Heart left ventricle (tissue), 16 donors: ENCODE measurements at regions of chr4 and their contacts with region 1.

Region 1: GRCh38 chr4:184100297-184100885 is 117.3 kb downstream of the ENPP6 start:
- DNase-seq: peak; percentile 26 to 85 (median 46)
- ATAC-seq: peak; percentile 57 to 80 (median 70)
- H3K4me3 ChIP-seq: no peak overlapping the region
- H3K27ac ChIP-seq: no peak overlapping the region
- H3K4me1 ChIP-seq: peaks cover 0 to 35% (median 12%) of the 10 kb centered on the region in 12 donors
- H3K27me3 ChIP-seq: no peaks in the 10 kb centered on the region
- CTCF ChIP-seq: peak in 11 of 12 donors; percentile 53 to 91 (median 65)
- POLR2A ChIP-seq: no peak

Region 2: DNA sequence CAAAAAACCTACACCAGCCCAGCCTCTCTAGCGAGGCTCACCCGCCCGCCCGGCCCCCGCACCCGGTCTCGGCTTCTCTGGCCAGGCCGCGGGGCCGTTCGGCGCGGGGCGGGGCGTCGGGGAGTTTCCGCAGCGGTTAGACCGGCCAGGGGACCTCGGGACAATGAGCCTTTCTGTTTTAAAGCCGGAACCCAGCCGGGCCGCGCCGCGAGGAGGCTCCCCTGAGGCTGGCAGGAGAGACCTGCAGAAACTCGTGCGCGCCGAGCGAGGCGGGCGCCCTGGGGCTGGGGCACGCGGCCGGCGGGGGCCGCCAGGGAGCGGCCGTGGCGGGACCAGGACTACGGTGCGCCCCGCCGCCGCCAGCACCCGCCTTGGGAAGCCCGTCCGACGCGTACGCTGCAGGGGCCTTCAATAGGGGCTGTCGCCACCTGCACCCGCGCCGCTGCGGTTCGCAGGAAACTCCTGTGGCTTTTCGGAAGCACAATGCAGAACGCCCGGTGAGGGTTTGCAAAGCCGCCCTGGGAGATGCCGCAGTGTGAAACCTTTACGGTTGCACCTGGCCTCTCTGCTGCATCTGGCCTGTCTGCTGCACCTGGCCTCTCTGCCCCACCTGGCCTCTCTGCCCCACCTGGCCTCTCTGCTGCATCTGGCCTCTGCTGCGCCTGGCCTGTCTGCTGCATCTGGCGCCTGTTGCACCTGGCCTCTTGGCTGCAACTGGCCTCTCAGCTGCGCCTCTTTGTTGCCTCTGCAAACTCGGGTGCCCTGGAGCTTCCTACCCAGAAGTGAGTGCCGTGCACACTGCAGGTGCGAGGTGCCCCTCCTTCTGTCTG is 377.4 kb before region 1 on chr4:
- intact Hi-C with region 1: loop called in 1 of 10 experiments (anchors 10 kb)
- DNase-seq: peak; percentile 61 to 86 (median 72)
- ATAC-seq: peak; percentile 24 to 78 (median 75)
- H3K4me3 ChIP-seq: peak overlapping the region; percentile 32 to 70 (median 58)
- H3K27ac ChIP-seq: peak overlapping the region in 11 of 12 donors; percentile 3 to 74 (median 44)
- H3K4me1 ChIP-seq: peaks cover 0 to 18% (median 1%) of the 10 kb centered on the region in 12 donors
- H3K27me3 ChIP-seq: no peaks in the 10 kb centered on the region
- CTCF ChIP-seq: peak in 4 of 12 donors; percentile 7 to 31 (median 13)
- POLR2A ChIP-seq: no peak

Region 3: GRCh38 chr4:184287697-184288255 is 187.4 kb after region 1 on chr4:
- intact Hi-C with region 1: no loop called
- DNase-seq: no peak
- ATAC-seq: peak; percentile 45 to 79 (median 78)
- H3K4me3 ChIP-seq: no peak overlapping the region
- H3K27ac ChIP-seq: peak overlapping the region in 1 of 12 donors; percentile 1
- H3K4me1 ChIP-seq: peaks cover 0 to 15% (median 0%) of the 10 kb centered on the region in 12 donors
- H3K27me3 ChIP-seq: no peaks in the 10 kb centered on the region
- CTCF ChIP-seq: peak in 10 of 12 donors; percentile 20 to 64 (median 50)
- POLR2A ChIP-seq: no peak

Region 4: DNA sequence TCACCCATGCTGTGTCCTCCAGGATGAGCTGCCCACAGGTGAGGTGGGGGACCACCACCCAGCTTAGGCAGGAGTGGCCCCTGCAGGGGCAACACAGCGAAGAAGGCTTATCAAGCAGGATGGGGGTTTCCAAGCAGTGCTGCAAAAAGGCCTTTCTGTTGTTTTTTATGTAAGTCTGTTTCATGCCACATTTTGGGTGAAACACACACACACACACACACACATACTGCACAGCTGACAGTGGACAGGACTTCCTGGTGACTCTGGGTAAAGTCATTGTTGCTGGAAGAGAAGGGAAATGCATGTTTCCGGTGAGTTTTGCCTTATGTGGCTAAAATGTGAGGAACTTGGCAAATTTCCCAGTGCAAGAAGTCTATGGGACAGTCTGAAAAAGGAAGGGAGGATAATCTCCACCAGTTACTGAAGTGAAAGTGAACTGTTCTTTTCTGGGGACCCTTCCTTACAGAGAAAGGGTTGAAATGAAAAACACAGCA is 254.8 kb after region 1 on chr4:
- intact Hi-C with region 1: no loop called
- DNase-seq: peak in 4 of 5 donors; percentile 46 to 86 (median 83)
- ATAC-seq: peak; percentile 60 to 95 (median 80)
- H3K4me3 ChIP-seq: peak overlapping the region in 1 of 12 donors; percentile 11
- H3K27ac ChIP-seq: peak overlapping the region in 11 of 12 donors; percentile 45 to 93 (median 64)
- H3K4me1 ChIP-seq: peaks cover 0 to 55% (median 14%) of the 10 kb centered on the region in 12 donors
- H3K27me3 ChIP-seq: no peaks in the 10 kb centered on the region
- CTCF ChIP-seq: no peak
- POLR2A ChIP-seq: no peak